Aorta (tissue), 5 donors: ENCODE measurements at regions of chr9 and their contacts with region 1.

Region 1: DNA sequence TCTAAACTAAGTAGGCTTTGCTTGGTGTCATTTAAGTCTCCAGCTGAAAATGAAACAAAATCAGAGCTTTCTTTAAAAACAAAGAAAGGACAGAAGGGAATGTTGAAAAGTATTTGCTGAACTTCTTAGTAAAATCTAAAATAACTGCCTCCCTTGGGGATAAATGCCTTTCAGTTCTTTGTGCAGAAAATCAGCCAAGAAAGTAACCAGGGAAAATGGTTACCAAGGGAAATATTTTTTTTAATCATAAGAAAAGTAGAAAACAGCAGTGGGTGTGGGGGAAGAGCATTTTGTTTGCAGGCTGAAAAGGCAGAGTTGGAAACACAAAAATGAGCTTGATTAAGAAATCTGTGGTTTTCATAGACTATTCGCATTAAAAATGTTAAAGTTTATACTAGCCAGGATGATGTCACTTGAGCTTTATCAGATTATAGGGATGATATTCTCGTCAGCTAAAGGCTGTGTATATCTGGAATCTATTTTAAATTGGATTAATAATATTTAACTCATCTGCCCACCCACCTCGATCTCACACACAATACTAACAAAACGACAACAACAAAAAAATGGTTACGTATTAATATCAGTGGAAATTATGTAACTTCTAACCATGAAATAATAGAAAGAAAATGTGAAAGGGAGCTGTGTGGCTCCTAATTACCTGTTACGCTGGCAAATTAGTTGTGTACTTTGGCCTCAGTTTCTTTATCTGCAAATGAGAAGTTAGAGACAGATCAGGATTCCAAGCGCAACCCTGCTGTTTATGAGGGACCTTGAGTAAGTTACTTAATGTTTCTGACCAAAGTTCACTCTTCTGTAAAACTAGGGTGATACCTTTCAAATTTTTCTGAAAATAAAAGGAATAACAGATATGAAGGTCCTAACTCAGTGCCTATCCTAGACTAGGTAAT is at the start of gene ECM2:
- DNase-seq: no peak
- ATAC-seq: peak; percentile 77
- H3K4me3 ChIP-seq: peak within 1 kb of the TSS; percentile 67 to 76
- H3K27ac ChIP-seq: peak within 1 kb of the TSS; percentile 64 to 83
- H3K4me1 ChIP-seq: peaks cover 0 to 2% of the 10 kb centered on the region in 2 donors
- H3K27me3 ChIP-seq: no peaks in the 10 kb centered on the region
- total RNA-seq, gene ECM2: 54.6 to 65.6 TPM

Region 2: GRCh38 chr9:92463984-92464383 is 72.2 kb before region 1 on chr9:
- intact Hi-C with region 1: loop called in 1 of 2 experiments (anchors 2 kb)
- DNase-seq: no peak
- ATAC-seq: peak; percentile 87
- H3K4me3 ChIP-seq: no peak overlapping the region
- H3K27ac ChIP-seq: peak overlapping the region; percentile 98 to 100
- H3K4me1 ChIP-seq: peaks cover 4 to 5% of the 10 kb centered on the region in 2 donors
- H3K27me3 ChIP-seq: no peaks in the 10 kb centered on the region

Region 3: DNA sequence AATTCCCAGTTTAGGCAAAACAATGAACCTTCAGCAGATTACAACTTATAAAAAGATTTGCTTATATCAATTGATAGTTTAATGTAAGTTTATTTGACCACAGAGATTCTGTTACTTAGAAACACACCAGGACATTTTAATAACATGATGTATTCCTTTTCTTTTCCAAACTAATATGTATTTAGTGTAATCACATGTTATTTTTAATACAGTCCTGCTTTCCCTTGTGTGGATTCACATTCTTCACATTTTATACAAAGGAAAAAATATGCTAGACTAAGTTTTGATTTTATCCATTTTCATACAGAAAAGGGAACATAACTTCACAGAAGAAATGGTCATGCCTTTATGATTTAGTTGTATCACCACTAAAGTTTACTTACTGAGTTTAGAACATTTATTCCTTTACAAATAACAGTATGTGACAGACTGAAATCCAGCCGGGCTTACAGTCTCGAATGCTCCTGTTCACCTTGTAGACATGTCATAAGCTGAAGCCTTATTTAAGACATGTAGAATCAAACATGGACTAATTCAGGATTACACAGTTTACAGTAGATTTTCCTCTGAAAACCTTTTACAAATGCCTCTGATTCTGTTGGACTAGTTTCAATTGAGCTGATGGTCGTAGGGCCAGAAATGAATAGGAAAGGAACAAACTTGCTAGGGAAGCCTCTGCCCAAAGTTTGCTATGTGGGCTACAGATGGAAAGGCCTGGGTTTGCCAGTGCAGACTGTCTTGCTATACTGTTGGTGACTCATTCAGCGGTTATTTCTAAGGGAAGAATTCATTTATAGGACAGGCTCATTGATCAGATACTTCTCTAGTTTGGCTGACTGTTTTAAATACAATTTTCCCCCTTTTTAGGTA is 47.3 kb before region 1 on chr9:
- intact Hi-C with region 1: loop called in 1 of 2 experiments (anchors 5 kb)
- DNase-seq: no peak
- ATAC-seq: no peak
- H3K4me3 ChIP-seq: no peak overlapping the region
- H3K27ac ChIP-seq: peak overlapping the region; percentile 31 to 97
- H3K4me1 ChIP-seq: peaks cover 6 to 10% of the 10 kb centered on the region in 2 donors
- H3K27me3 ChIP-seq: no peaks in the 10 kb centered on the region

Region 4: DNA sequence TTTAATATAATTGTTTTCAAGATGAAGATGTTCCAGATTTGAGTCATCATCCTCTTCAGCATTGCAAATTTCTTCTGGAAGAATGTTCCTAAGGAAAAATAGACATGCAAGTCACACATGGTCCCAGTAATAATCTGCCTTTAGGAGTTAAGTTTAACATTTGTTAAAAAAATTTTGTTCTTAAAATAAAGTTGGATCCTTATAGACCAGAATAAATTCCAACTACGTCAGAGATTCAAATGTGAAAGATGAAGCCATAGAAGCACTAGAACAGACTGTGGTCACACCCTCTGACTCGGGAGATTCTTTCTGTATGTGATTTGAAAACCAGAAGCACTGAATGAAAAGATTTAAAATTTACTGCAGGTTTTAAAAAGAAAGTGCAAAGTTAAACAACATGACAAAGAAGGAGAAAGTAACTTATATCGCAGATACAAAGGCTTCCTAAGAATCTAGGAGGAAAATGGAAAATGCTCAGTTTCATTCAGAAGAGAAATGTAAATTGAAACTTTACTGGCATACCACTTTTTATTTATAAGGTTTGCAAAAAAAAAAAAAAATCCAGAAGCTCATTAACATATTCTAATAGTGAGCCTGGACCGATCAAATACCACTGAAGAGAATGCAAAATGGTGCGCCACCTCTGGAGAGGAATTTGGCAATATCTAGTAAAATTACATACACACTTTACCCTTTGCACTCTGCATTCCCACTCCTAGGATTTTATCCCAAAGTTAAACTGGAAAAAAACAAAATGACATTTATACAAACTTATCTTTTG is 39.6 kb before region 1 on chr9:
- intact Hi-C with region 1: loop called in 1 of 2 experiments (anchors 5 kb)
- DNase-seq: no peak
- ATAC-seq: no peak
- H3K4me3 ChIP-seq: no peak overlapping the region
- H3K27ac ChIP-seq: no peak overlapping the region
- H3K4me1 ChIP-seq: peaks cover 0 to 1% of the 10 kb centered on the region in 2 donors
- H3K27me3 ChIP-seq: no peaks in the 10 kb centered on the region

Region 5: GRCh38 chr9:92525306-92525705 is 10.9 kb before region 1 on chr9:
- intact Hi-C with region 1: no loop called
- DNase-seq: no peak
- ATAC-seq: no peak
- H3K4me3 ChIP-seq: no peak overlapping the region
- H3K27ac ChIP-seq: no peak overlapping the region
- H3K4me1 ChIP-seq: peaks cover 0 to 2% of the 10 kb centered on the region in 2 donors
- H3K27me3 ChIP-seq: no peaks in the 10 kb centered on the region

Region 6: GRCh38 chr9:92590377-92590776 is 54.2 kb after region 1 on chr9:
- intact Hi-C with region 1: loop called (anchors 5 kb)
- DNase-seq: peak in 1 of 2 donors; percentile 77
- ATAC-seq: peak; percentile 92
- H3K4me3 ChIP-seq: no peak overlapping the region
- H3K27ac ChIP-seq: peak overlapping the region in 1 of 2 donors; percentile 43
- H3K4me1 ChIP-seq: peaks cover 2 to 11% of the 10 kb centered on the region in 2 donors
- H3K27me3 ChIP-seq: no peaks in the 10 kb centered on the region